ENCODE measurements at regions of chr20 and their contacts with region 1.

Region 1: GRCh38 chr20:5788385-5788895 is 38.2 kb downstream of the SHLD1 start:
- DNase-seq: peak; percentile 88
- H3K4me3 Mint-ChIP-seq: no peak overlapping the region
- H3K27ac Mint-ChIP-seq: no peak overlapping the region
- H3K4me1 Mint-ChIP-seq: peaks cover 14% of the 10 kb centered on the region
- H3K27me3 Mint-ChIP-seq: no peaks in the 10 kb centered on the region
- CTCF ChIP-seq: peak; percentile 90

Region 2: DNA sequence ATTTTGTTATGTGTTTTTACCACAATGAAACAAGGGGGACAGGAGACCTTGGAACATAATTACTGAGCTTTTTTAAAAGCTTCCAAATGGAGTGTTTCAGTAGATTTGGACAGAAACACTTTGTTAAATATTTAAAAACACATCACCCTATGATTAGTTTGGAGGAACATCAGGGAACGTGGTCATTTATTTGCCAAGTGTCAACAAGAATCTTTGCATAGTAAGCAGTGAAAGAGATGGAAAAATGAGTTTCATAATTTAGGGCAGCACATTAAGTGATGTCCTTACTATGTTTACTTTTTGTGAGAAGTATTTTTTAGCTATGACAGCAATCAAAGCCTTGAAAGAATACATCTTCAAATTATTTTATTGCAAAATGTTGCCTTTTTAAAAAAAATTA is 554.3 kb before region 1 on chr20:
- CTCF ChIA-PET with region 1: no interaction called
- POLR2A ChIA-PET with region 1: no interaction called
- intact Hi-C with region 1: no loop called
- DNase-seq: no peak
- H3K4me3 Mint-ChIP-seq: no peak overlapping the region
- H3K27ac Mint-ChIP-seq: no peak overlapping the region
- H3K4me1 Mint-ChIP-seq: no peaks in the 10 kb centered on the region
- H3K27me3 Mint-ChIP-seq: peaks cover 92% of the 10 kb centered on the region
- CTCF ChIP-seq: no peak

Region 3: DNA sequence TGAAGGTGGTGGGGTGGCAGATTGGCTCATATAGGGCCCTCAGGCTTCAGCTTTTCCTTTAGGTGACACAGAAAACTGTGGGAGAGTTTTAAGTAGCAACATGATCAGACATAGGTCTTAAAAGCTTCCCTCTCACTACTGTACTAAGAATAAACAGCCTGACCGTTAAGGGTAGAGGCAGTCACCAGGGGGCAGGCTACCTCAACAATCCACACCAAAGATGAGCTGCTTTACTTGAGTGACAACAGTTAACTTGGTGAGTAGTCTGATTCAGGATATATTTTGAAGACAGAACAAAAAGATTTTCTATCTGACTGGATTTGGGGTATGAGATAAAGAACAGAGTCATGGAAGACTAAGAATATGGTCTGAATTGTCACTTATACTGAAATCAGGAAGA is 231.3 kb before region 1 on chr20:
- CTCF ChIA-PET with region 1: interaction called, 69 read pairs
- POLR2A ChIA-PET with region 1: interaction called, 15 read pairs
- intact Hi-C with region 1: loop called (anchors 1 kb)
- DNase-seq: peak; percentile 56
- H3K4me3 Mint-ChIP-seq: no peak overlapping the region
- H3K27ac Mint-ChIP-seq: no peak overlapping the region
- H3K4me1 Mint-ChIP-seq: peaks cover 4% of the 10 kb centered on the region
- H3K27me3 Mint-ChIP-seq: no peaks in the 10 kb centered on the region
- CTCF ChIP-seq: peak; percentile 60

Region 4: DNA sequence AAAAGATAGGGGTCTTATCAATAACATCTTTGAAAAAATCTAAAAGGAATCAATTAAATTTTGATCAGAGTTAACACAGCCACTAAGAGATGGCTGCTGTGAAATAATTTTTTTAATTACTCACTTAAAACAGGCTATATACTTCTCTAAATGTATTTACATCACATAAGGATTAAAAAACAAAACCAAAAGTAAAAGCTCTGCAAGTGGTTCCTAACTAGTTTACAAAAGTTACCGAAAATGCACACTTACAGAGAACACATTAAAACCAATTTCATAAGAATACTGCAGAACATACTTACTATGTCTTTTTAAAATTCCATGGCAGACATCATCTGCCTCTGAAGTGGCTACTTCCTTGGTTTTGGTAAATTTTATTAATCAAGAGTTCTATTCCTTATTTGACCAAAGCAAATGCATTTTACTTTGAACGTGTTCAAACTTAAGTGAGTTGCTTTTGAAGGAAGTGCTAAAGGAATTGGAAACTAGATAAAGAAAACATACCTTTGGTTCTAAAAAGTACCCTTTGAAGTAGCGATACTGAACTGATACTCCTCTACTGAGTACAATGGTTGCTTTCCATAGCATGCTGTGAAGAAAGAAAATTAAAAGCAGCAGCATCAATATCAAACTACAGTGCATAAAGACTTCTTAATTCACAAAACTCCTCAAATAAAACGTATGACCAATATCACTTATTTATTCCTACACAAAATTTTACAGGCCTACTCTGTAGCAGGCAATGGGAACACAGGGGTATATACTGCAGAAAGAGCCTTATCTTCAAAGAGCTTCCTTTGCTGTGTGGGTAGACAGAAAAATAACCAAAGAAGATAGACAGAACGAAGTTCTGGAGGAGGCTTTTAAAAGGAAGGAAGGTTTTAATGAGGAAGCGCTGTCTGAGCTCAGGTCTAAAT is 195.4 kb before region 1 on chr20:
- CTCF ChIA-PET with region 1: interaction called, 12 read pairs
- POLR2A ChIA-PET with region 1: interaction called, 5 read pairs
- intact Hi-C with region 1: no loop called
- DNase-seq: no peak
- H3K4me3 Mint-ChIP-seq: no peak overlapping the region
- H3K27ac Mint-ChIP-seq: no peak overlapping the region
- H3K4me1 Mint-ChIP-seq: peaks cover 6% of the 10 kb centered on the region
- H3K27me3 Mint-ChIP-seq: no peaks in the 10 kb centered on the region
- CTCF ChIP-seq: no peak

Region 5: GRCh38 chr20:5658912-5659345 is 129.5 kb before region 1 on chr20:
- CTCF ChIA-PET with region 1: interaction called, 20 read pairs
- POLR2A ChIA-PET with region 1: interaction called, 27 read pairs
- intact Hi-C with region 1: no loop called
- DNase-seq: peak; percentile 83
- H3K4me3 Mint-ChIP-seq: no peak overlapping the region
- H3K27ac Mint-ChIP-seq: peak overlapping the region; percentile 43
- H3K4me1 Mint-ChIP-seq: peaks cover 31% of the 10 kb centered on the region
- H3K27me3 Mint-ChIP-seq: no peaks in the 10 kb centered on the region
- CTCF ChIP-seq: no peak

Region 6: GRCh38 chr20:5766085-5766764 is 22.2 kb before region 1 on chr20:
- CTCF ChIA-PET with region 1: interaction called, 13 read pairs
- POLR2A ChIA-PET with region 1: interaction called, 12 read pairs
- intact Hi-C with region 1: no loop called
- DNase-seq: no peak
- H3K4me3 Mint-ChIP-seq: no peak overlapping the region
- H3K27ac Mint-ChIP-seq: no peak overlapping the region
- H3K4me1 Mint-ChIP-seq: peaks cover 13% of the 10 kb centered on the region
- H3K27me3 Mint-ChIP-seq: no peaks in the 10 kb centered on the region
- CTCF ChIP-seq: no peak

Region 7: GRCh38 chr20:6466075-6466810 is 677.8 kb after region 1 on chr20:
- CTCF ChIA-PET with region 1: no interaction called
- POLR2A ChIA-PET with region 1: no interaction called
- intact Hi-C with region 1: no loop called
- DNase-seq: peak; percentile 26
- H3K4me3 Mint-ChIP-seq: no peak overlapping the region
- H3K27ac Mint-ChIP-seq: peak overlapping the region; percentile 16
- H3K4me1 Mint-ChIP-seq: peaks cover 8% of the 10 kb centered on the region
- H3K27me3 Mint-ChIP-seq: no peaks in the 10 kb centered on the region
- CTCF ChIP-seq: no peak

Measured in MCF 10A (cell line).